Naive thymus-derived CD4-positive, alpha-beta T cell (primary cell): ENCODE measurements at regions of chr15 and their contacts with region 1.

Region 1: DNA sequence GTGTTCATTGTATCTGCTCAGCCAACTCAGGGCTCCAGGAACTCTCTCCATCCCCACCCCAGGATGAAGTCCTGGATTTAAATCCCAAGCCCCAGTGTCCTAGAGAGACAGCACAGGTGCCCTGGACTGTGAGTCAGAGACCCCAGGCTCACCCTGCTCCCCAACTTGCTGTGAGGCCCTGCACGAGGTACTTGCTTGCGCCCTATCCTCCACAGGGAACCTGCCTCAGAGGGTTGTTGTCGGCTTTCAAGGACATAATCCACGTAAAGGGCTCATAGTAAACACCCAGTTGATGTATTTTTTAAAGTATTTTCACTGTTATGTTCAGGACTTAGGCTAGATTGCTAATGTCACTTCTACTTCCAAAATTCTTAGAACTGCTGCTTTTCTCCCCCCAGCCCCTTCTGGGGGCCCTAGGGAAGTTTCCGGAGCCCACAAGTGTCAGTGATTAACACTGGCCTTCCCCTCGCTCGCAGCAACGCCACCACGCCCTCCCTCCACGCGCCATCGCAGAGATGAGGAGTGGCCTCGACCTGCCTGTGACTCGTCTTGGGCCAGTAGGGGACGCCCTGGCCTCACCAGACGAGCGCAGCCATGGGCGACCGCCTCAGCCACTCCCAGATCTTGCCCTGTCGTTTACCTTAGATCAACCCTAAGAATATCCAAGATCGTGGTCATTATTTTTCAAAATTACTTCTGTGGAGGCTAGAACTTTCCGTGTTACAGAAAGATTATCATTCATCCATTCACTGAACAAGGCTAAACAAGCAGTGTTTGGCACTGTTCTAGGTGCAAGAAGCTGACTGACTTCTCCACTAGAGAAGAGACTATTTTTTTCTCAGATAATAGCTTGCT is 6.0 kb upstream of the SRP14 start:
- DNase-seq: peak; percentile 57 to 85 (median 74)
- ATAC-seq: peak; percentile 94
- H3K4me3 ChIP-seq: no peak overlapping the region
- H3K4me3 Mint-ChIP-seq: peak overlapping the region; percentile 16 to 76 (median 68)
- H3K27ac ChIP-seq: peak overlapping the region; percentile 53
- H3K27ac Mint-ChIP-seq: peak overlapping the region; percentile 34 to 88 (median 83)
- H3K4me1 ChIP-seq: peaks cover 40 to 50% of the 10 kb centered on the region in 2 donors
- H3K4me1 Mint-ChIP-seq: peaks cover 36 to 71% (median 62%) of the 10 kb centered on the region in 7 donors
- H3K27me3 ChIP-seq: no peaks in the 10 kb centered on the region
- H3K27me3 Mint-ChIP-seq: no peaks in the 10 kb centered on the region

Region 2: DNA sequence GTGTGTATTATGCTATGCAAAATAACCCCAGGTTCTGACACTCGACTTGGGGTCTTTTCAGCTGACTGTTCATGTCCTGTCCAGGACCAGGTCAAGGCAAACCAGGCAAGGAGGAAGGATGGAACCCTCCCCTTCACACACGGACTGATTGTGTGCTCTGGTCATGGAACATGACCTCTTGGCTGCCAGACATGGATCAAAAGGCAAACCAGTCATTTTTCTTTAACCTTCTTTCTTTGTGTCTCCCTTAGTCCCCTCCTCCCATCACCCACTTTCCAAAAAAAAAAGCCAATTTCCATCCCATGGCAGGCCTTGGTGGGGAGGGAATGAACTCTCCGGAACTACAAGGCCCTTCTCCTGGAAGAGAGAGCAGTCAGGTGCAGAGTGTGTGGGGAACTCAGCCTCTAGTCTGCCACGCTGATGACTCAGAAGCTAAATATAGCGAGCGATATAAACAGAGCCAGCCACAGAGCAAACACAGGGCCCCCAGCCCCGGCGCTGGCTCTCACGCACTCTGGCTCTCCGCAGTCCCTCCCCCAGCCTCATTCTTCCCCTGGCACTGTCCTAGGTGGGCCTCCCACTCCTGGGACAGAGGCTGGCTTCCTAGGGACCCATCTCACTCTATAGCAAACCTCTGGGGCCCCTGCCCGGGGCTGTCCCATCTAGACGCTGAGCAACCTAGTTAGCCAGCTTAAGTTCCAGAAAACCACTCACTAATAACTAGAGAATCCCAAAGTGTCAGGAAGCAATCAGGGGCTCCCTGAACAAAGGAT is 53.7 kb after region 1 on chr15:
- CTCF ChIA-PET with region 1: interaction called, 69 read pairs
- POLR2A ChIA-PET with region 1: interaction called, 8 read pairs
- intact Hi-C with region 1: loop called in 1 of 2 experiments (anchors 1 kb)
- DNase-seq: peak in 5 of 9 donors; percentile 20 to 76 (median 48)
- ATAC-seq: peak; percentile 90
- H3K4me3 ChIP-seq: no peak overlapping the region
- H3K4me3 Mint-ChIP-seq: peak overlapping the region; percentile 55 to 86 (median 66)
- H3K27ac ChIP-seq: peak overlapping the region; percentile 14
- H3K27ac Mint-ChIP-seq: peak overlapping the region; percentile 28 to 97 (median 81)
- H3K4me1 ChIP-seq: peaks cover 35 to 37% of the 10 kb centered on the region in 2 donors
- H3K4me1 Mint-ChIP-seq: peaks cover 33 to 86% (median 56%) of the 10 kb centered on the region in 7 donors
- H3K27me3 ChIP-seq: no peaks in the 10 kb centered on the region
- H3K27me3 Mint-ChIP-seq: peaks cover 0 to 1% (median 0%) of the 10 kb centered on the region in 5 donors

Region 3: GRCh38 chr15:40128766-40129660 is 84.1 kb after region 1 on chr15:
- CTCF ChIA-PET with region 1: no interaction called
- POLR2A ChIA-PET with region 1: no interaction called
- intact Hi-C with region 1: loop called in 1 of 2 experiments (anchors 2 kb)
- DNase-seq: peak in 6 of 9 donors; percentile 18 to 75 (median 56)
- ATAC-seq: peak; percentile 50
- H3K4me3 ChIP-seq: no peak overlapping the region
- H3K4me3 Mint-ChIP-seq: no peak overlapping the region
- H3K27ac ChIP-seq: no peak overlapping the region
- H3K27ac Mint-ChIP-seq: peak overlapping the region in 1 of 9 donors; percentile 81
- H3K4me1 ChIP-seq: no peaks in the 10 kb centered on the region
- H3K4me1 Mint-ChIP-seq: no peaks in the 10 kb centered on the region
- H3K27me3 ChIP-seq: no peaks in the 10 kb centered on the region
- H3K27me3 Mint-ChIP-seq: peaks cover 0 to 10% (median 5%) of the 10 kb centered on the region in 5 donors

Region 4: DNA sequence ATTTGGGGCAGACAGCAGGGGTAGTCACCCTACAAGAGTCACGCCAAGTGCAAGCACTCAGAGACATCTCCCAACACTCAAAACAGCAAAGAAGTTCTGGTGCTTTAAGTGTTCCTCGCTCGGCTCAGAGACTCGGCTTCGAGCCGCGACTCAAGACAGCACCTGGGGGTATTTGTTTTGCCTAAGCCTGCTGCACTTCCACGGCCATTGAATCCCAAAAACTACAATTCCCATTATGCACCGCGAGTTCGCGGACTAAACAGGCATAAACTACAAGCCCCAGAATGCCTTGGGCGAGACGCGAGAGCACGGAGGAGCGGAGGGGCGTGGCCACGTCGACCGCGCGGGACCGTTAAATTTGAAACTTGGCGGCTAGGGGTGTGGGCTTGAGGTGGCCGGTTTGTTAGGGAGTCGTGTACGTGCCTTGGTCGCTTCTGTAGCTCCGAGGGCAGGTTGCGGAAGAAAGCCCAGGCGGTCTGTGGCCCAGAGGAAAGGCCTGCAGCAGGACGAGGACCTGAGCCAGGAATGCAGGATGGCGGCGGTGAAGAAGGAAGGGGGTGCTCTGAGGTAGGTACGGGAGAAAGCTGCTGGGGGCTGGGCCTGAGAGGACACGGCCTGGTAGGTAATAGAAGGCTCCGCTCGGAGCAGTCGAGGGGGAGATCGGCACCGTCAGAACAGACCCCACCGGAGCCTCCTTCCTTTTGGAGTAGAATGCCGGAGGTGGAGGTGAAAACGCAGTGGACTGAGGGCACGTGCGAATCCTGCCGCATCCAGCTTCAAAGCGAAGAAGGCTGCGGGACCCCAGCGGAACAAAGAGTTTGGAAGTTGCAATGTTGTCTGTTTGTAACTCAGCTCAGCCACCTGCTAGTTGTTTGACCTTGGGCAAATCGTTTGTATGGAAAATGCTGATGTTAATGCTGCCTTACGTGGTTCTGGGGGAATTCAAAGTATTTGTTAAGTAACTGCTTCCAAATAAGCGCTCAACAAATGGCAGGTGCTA is 116.0 kb after region 1 on chr15 and contains the start of gene BUB1B:
- CTCF ChIA-PET with region 1: interaction called, 3 read pairs
- POLR2A ChIA-PET with region 1: no interaction called
- intact Hi-C with region 1: loop called in 1 of 2 experiments (anchors 1 kb)
- DNase-seq: peak; percentile 79 to 94 (median 92)
- ATAC-seq: peak; percentile 100
- H3K4me3 ChIP-seq: peak within 1 kb of the TSS; percentile 80
- H3K4me3 Mint-ChIP-seq: peak within 1 kb of the TSS in 2 of 10 donors; percentile 15 to 51
- H3K27ac ChIP-seq: peak within 1 kb of the TSS; percentile 29
- H3K27ac Mint-ChIP-seq: no peak within 1 kb of the TSS
- H3K4me1 ChIP-seq: peaks cover 0 to 7% of the 10 kb centered on the region in 2 donors
- H3K4me1 Mint-ChIP-seq: peaks cover 0 to 12% (median 0%) of the 10 kb centered on the region in 7 donors
- H3K27me3 ChIP-seq: no peaks in the 10 kb centered on the region
- H3K27me3 Mint-ChIP-seq: no peaks in the 10 kb centered on the region
- total RNA-seq, gene BUB1B: 0.41 to 55.7 (median 1.2) TPM

Region 5: DNA sequence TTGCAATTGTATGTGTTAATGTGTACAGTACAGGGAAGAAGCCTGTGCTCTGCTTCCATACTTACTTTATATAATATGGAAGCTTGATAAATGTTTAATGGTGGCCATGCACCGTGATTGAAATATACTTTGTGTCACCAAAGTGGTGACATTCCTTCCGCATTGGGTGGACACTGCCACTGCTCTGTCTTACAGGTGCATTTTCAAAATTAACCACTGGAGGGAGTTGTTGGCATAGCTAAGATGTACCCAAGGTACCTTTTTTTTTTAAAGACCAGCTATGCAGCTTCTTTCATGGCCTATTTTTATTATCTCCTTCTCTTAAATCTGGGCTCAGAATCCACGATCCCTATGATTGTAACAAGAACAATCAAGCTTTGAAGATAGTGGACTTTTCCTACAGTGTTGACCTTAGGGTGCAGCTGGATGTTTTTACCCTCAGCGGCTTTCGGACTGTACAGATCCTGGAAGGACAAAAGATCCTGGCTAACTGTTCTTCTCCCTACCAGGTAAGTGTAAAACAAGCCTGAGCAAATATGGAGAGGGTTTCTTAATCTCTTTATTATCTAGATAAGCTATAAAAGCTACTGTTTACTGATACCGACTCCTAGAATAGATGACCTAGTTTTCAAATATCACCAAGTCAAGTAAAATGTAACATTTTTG is 172.3 kb after region 1 on chr15:
- CTCF ChIA-PET with region 1: interaction called, 3 read pairs
- POLR2A ChIA-PET with region 1: interaction called, 5 read pairs
- intact Hi-C with region 1: loop called in 1 of 2 experiments (anchors 1 kb)
- DNase-seq: peak in 7 of 9 donors; percentile 50 to 75 (median 63)
- ATAC-seq: peak; percentile 96
- H3K4me3 ChIP-seq: no peak overlapping the region
- H3K4me3 Mint-ChIP-seq: no peak overlapping the region
- H3K27ac ChIP-seq: no peak overlapping the region
- H3K27ac Mint-ChIP-seq: no peak overlapping the region
- H3K4me1 ChIP-seq: no peaks in the 10 kb centered on the region
- H3K4me1 Mint-ChIP-seq: peaks cover 0 to 2% (median 0%) of the 10 kb centered on the region in 7 donors
- H3K27me3 ChIP-seq: no peaks in the 10 kb centered on the region
- H3K27me3 Mint-ChIP-seq: no peaks in the 10 kb centered on the region

Region 6: DNA sequence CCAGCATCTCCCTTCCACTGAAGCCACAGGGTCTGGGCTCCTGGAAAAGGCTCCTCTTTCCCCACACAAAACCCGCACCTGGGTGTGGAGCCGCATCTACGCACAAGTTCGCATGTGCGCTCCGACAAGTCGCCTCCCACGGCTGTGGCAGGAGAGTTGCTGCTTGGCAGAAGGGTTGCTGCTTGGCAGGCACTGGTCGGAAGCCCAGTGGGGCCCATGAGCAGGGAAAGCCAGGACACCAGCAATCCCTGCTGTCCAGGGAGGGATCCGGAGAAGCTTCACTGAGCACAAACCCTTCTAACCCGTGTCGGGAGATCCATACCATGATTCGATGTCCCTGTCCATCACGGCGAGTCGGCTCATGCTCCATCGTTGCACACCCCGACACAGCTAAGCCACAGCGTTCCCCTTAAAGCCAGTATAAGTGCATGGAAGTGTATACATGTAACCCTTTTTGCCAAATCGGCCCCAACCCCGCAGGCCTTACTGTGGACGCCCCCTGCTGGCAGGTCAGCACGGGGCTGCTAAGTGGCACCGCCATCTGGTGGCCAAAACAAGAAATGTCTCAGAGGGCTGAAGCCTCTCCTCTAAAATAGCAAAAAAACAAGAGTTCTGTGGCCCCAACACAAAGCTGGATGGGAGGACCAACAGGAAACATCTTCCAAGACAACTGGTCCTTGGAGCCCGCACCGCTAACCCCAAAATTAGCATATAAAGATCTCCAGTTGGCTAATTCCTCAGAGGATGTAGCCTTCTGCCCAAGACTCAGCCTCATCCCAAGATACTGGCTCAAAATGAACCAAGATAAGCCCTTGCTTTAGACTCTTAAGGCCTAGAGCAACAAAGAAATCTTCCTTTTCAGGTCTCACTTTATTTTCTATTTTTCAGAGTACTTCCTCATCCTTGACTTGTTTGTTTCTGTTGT is 229.7 kb after region 1 on chr15:
- CTCF ChIA-PET with region 1: interaction called, 49 read pairs
- POLR2A ChIA-PET with region 1: interaction called, 4 read pairs
- intact Hi-C with region 1: loop called (anchors 1 kb)
- DNase-seq: peak; percentile 71 to 95 (median 88)
- ATAC-seq: peak; percentile 94
- H3K4me3 ChIP-seq: no peak overlapping the region
- H3K4me3 Mint-ChIP-seq: peak overlapping the region in 1 of 10 donors; percentile 45
- H3K27ac ChIP-seq: no peak overlapping the region
- H3K27ac Mint-ChIP-seq: peak overlapping the region in 6 of 9 donors; percentile 17 to 70 (median 50)
- H3K4me1 ChIP-seq: peaks cover 0 to 3% of the 10 kb centered on the region in 2 donors
- H3K4me1 Mint-ChIP-seq: peaks cover 0 to 17% (median 5%) of the 10 kb centered on the region in 7 donors
- H3K27me3 ChIP-seq: no peaks in the 10 kb centered on the region
- H3K27me3 Mint-ChIP-seq: peaks cover 12 to 29% (median 16%) of the 10 kb centered on the region in 5 donors